IMR-90 (cell line): ENCODE measurements at regions of chr3 and their contacts with region 1.

Region 1: DNA sequence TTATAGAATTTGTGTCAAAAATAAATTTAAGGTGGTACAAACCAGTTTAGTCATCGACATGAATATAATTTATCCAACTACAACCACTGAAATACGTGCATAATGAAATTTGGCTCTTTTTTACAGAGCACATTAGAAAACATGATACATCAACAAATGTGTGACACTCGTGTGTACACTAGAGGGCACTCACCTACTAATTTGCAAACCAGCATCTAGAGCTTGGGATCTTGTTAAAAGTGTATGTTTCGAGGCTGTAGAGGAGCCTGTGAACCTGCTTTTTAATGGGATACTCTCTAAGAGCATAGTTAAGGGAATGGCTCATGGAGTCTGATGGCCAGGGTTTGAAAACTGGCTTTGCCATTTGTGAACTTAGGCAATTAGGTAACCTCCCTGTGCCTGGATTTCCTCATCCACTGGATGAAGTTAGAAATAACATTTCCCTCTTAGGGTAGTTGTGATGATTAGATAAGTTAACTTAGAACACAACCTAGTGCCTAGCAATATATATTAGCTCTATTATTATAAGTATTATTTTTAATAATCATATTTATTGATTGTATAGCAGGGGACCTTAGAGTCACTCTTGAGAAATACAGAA is 8.8 kb upstream of the CPOX start:
- DNase-seq: peak; percentile 76
- ATAC-seq: peak; percentile 95
- H3K4me3 ChIP-seq: no peak overlapping the region
- H3K27ac ChIP-seq: no peak overlapping the region
- H3K4me1 ChIP-seq: peaks cover 2% of the 10 kb centered on the region; the same call in 1 of the 2 replicates
- H3K27me3 ChIP-seq: no peaks in the 10 kb centered on the region
- CTCF ChIP-seq: peak; percentile 84
- POLR2A ChIP-seq: no peak
- RAD21 ChIP-seq: peak; percentile 86

Region 2: DNA sequence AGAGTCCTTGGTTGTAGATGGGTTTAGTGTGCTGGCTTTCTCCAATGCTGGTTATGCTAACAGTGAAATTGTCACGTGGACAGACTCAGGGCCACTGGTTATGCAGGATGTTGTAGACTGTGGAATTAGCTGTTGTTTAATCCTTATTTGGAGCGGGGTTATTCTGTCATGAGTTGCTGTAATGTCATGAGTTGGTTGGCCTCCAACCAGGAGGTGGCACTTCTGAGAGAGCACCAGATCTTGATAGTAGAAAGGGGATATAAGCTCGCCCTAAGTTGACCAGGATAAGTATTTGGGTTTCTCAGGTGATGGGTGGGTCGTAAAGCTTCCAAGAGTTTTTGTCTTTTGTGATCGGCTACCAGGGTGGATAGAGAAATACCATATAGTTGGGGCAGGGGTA is 42.4 kb after region 1 on chr3:
- CTCF ChIA-PET with region 1: no interaction called
- POLR2A ChIA-PET with region 1: no interaction called
- dilution Hi-C with region 1: no loop called
- in situ Hi-C with region 1: no loop called
- intact Hi-C with region 1: no loop called
- DNase-seq: no peak
- ATAC-seq: no peak
- H3K4me3 ChIP-seq: no peak overlapping the region
- H3K27ac ChIP-seq: no peak overlapping the region
- H3K4me1 ChIP-seq: no peaks in the 10 kb centered on the region
- H3K27me3 ChIP-seq: peaks cover 2% of the 10 kb centered on the region; the same call in 1 of the 2 replicates
- CTCF ChIP-seq: no peak
- POLR2A ChIP-seq: no peak
- RAD21 ChIP-seq: no peak

Region 3: GRCh38 chr3:98705706-98706105 is 103.5 kb after region 1 on chr3:
- CTCF ChIA-PET with region 1: interaction called, 4 read pairs
- POLR2A ChIA-PET with region 1: no interaction called
- dilution Hi-C with region 1: no loop called
- in situ Hi-C with region 1: no loop called
- intact Hi-C with region 1: loop called (anchors 2 kb)
- DNase-seq: no peak
- ATAC-seq: peak; percentile 78
- H3K4me3 ChIP-seq: no peak overlapping the region
- H3K27ac ChIP-seq: no peak overlapping the region
- H3K4me1 ChIP-seq: peaks cover 1% of the 10 kb centered on the region
- H3K27me3 ChIP-seq: peaks cover 6% of the 10 kb centered on the region
- CTCF ChIP-seq: peak; percentile 28
- POLR2A ChIP-seq: no peak
- RAD21 ChIP-seq: peak; percentile 31

Region 4: DNA sequence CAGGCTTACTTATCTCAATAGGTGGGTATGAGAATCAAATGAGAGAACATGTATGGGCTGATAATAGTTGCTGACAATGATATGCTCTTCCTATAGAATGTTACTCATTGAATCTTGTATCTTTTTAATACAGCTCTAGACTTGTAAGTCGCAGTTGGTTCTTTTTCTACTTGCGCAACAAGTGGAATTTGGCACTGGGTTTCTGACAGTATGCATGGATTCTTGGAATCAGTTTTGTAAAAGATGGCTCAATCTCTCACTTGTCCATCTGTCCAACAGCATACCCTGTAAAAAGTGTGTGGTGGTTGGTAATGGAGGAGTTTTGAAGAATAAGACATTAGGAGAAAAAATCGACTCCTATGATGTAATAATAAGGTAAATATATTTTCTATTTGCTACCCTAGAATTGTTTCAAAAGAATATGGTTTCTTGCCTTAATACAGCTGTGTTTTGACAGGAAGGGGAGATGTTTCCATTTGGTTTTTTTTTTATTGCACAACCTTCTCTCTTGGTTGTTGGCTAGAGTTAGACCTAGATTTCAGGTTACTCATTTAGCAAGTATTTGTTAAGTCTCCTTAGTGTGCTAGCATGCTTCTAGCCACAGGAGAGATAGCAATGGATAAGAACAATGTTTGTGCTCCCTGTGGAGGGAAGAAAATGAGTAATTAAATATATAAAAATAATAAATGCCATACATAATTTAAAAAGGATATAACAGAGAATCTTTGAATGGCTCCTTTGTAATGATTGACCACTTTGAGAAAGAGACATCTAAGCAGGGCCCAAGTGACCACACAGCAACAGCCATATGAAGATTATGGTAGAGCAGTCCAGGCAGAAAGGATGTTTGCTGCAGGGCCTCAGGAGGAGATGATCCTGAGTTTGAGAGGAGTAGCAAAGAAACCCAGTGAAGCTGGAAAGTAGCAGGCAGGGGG is 182.8 kb after region 1 on chr3:
- CTCF ChIA-PET with region 1: no interaction called
- POLR2A ChIA-PET with region 1: no interaction called
- dilution Hi-C with region 1: no loop called
- in situ Hi-C with region 1: loop called (anchors 10 kb)
- intact Hi-C with region 1: loop called (anchors 5 kb)
- DNase-seq: peak; percentile 94
- ATAC-seq: peak; percentile 89
- H3K4me3 ChIP-seq: no peak overlapping the region
- H3K27ac ChIP-seq: peak overlapping the region; percentile 75; the same call in 1 of the 2 replicates
- H3K4me1 ChIP-seq: peaks cover 10% of the 10 kb centered on the region
- H3K27me3 ChIP-seq: no peaks in the 10 kb centered on the region
- CTCF ChIP-seq: no peak
- POLR2A ChIP-seq: no peak
- RAD21 ChIP-seq: no peak

Region 5: DNA sequence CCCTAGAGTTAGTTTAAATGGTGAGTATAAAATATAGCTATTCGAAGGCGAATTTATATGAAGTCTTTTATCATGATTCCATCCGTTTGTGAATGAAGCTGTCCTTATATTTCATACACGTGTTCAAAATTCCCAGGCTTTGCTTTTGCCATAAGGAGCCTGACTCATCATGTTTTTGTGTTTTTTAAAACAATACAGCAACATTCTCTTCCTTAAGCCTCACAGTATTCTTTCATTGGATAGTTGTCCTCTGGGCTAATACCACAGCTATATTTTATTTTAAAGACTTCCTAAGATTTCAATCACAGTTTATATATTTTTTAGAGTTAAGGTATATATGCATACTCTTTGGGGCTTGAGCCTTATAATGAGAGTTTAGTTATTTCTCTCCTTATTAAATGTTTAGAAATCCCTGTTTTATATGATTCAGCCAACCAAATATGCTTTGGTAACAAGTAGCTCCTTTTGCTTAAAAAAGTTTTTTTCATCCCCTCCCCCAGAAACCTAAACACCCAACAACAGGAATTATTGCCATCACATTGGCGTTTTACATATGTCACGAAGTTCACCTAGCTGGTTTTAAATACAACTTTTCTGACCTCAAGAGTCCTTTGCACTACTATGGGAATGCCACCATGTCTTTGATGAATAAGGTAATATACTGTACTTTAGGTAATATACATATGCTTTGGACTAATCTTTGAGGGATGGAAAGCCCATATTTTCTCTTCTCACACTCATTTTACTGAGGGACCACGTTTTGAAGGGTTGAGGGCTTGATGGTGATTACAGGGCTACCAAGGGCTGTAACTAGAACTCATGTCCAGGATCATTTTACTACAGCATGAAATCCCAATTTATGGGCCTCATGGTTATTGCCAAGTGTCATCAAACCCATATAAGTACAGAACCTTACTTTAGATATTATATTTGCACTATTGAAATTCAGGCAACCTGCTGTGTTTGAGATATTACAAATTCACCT is 189.5 kb after region 1 on chr3:
- CTCF ChIA-PET with region 1: interaction called, 3 read pairs
- POLR2A ChIA-PET with region 1: no interaction called
- dilution Hi-C with region 1: no loop called
- in situ Hi-C with region 1: loop called (anchors 10 kb)
- intact Hi-C with region 1: loop called (anchors 5 kb)
- DNase-seq: peak; percentile 40
- ATAC-seq: peak; percentile 25
- H3K4me3 ChIP-seq: no peak overlapping the region
- H3K27ac ChIP-seq: no peak overlapping the region
- H3K4me1 ChIP-seq: peaks cover 4% of the 10 kb centered on the region; the same call in 1 of the 2 replicates
- H3K27me3 ChIP-seq: no peaks in the 10 kb centered on the region
- CTCF ChIP-seq: no peak
- POLR2A ChIP-seq: no peak
- RAD21 ChIP-seq: no peak

Region 6: DNA sequence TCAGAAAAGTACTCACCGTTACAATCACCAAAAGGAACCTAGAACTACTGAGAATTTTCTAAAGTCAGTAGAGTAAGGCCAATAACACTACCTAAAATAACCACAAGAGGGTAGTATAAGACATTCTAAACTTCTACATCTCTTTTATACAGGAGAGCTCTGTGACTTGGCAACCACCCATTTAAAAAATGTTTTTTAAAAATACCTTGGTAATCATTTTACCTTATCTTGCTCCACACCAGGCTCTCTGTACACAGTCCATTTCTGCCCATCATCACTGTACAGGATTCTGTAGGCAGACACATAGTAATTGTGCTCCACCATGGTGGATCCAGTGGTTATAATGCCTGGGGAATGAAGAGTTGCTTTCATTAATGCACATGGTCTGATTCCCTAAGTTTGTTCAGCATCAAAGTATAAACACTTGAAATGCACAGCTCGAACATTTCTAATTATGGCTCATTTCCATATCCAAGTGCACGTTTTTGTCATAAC is 215.4 kb after region 1 on chr3:
- CTCF ChIA-PET with region 1: interaction called, 23 read pairs
- POLR2A ChIA-PET with region 1: no interaction called
- dilution Hi-C with region 1: no loop called
- in situ Hi-C with region 1: loop called (anchors 5 kb)
- intact Hi-C with region 1: loop called (anchors 1 kb)
- DNase-seq: peak; percentile 59
- ATAC-seq: peak; percentile 65
- H3K4me3 ChIP-seq: no peak overlapping the region
- H3K27ac ChIP-seq: no peak overlapping the region
- H3K4me1 ChIP-seq: peaks cover 4% of the 10 kb centered on the region
- H3K27me3 ChIP-seq: no peaks in the 10 kb centered on the region
- CTCF ChIP-seq: peak; percentile 69
- POLR2A ChIP-seq: no peak
- RAD21 ChIP-seq: peak; percentile 72

Region 7: DNA sequence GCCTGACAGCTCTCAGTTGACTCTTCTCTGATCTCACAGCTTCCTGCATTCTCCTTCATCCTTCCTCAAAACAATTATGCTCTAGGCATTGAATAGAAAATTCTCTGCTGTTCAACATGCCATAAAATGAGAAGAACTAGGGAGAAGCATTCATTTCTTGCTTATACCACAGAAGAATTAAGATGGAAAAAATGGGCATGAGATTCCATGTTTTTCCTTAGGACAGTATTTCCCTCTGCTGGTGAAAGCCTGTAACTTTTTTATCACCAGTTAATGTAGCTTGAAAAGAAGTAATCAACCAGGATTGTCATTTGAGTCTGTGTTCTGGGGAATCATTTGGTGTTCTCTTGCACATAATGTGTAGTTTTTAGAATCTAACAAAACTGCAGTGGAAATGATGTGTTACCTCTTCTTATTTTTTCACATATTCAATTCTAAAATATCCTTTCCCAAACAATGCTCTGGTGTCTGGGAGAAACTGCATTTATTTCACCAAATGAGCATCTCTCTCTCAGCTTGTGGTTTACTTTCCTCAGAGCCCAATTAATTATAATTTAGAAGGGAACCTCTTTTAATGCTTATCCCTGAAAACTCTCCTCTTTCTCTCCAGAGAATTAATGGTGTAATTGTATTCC is 392.1 kb after region 1 on chr3:
- CTCF ChIA-PET with region 1: interaction called, 6 read pairs
- POLR2A ChIA-PET with region 1: no interaction called
- dilution Hi-C with region 1: no loop called
- in situ Hi-C with region 1: loop called (anchors 5 kb)
- intact Hi-C with region 1: loop called (anchors 1 kb)
- DNase-seq: peak; percentile 81
- ATAC-seq: peak; percentile 85
- H3K4me3 ChIP-seq: no peak overlapping the region
- H3K27ac ChIP-seq: no peak overlapping the region
- H3K4me1 ChIP-seq: no peaks in the 10 kb centered on the region
- H3K27me3 ChIP-seq: no peaks in the 10 kb centered on the region
- CTCF ChIP-seq: peak; percentile 85
- POLR2A ChIP-seq: 0 out of 2 replicates have a peak, but pooled peaks have one; percentile 24
- RAD21 ChIP-seq: peak; percentile 93